Thyroid gland (tissue), 4 donors: ENCODE measurements at regions of chr5 and their contacts with region 1.

Region 1: DNA sequence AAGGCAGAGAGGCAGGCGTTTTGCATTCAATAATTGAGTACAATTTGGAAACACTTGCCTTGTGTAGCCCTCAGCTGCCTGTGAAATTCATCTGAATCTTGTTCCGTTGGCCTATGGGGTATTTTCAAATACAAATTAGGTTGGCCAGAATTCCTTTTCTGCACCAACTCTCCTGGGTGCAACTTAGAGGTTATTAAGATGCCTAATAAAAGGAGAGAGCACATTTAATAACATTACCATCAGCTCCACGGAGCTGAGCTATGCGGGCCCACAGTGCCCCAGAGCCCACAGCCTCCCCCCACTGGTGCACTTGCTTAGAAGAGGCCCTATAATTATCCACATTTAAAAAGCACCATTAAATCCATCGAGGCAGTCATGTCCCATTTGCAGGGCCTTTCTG is 367.6 kb upstream of the CLINT1 start:
- DNase-seq: no peak
- H3K4me3 ChIP-seq: no peak overlapping the region
- H3K27ac ChIP-seq: no peak overlapping the region
- H3K4me1 ChIP-seq: no peaks in the 10 kb centered on the region
- H3K27me3 ChIP-seq: no peaks in the 10 kb centered on the region
- CTCF ChIP-seq: no peak
- POLR2A ChIP-seq: no peak

Region 2: GRCh38 chr5:158648631-158649030 is 422.1 kb after region 1 on chr5:
- intact Hi-C with region 1: loop called (anchors 5 kb)
- DNase-seq: no peak
- H3K4me3 ChIP-seq: no peak overlapping the region
- H3K27ac ChIP-seq: no peak overlapping the region
- H3K4me1 ChIP-seq: no peaks in the 10 kb centered on the region
- H3K27me3 ChIP-seq: no peaks in the 10 kb centered on the region
- CTCF ChIP-seq: no peak
- POLR2A ChIP-seq: no peak